ENCODE measurements at regions of chr6 and their contacts with region 1.

Region 1: DNA sequence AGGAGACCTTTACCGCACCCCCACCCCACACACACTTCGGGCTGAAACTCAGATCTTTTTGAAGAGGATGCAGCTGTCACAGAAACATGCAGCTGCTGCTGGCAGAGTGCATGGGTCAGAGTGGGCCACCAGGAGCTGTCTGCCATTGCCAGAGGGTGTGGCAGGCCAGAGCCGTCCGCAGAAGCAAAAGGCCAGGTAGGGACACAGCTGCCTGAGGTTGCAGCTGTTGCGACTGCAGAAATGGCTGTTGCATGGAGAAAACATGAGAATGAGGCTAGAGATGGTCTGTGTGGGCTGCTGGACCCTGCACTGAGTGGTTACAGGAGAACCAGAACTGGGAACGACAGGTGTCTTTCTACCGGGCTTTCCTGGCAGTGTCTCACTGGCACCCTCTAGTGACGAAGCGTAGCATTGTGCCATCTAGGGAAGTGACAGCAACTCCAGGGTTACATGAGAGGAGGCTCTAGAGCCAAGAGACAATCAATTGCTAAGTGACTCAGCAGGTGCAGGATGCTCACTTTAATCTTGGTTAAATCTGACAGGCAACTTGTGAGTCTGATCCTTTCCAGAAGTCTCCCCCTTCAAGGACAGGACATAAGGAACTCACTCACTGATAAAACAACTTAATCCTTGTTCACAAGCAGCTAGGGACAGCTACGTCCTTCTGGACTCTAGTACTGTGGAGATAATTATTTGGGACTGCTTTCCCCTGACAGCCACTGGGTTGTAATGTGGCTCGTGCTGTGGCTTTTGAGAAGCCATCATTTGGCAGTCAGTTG is 29.1 kb upstream of the SERPINB9 start:
- DNase-seq: peak; percentile 78 to 84 (median 81)
- ATAC-seq: peak; percentile 89 to 97 (median 95)
- H3K4me3 ChIP-seq: peak overlapping the region in 5 of 12 donors; percentile 15 to 33 (median 18)
- H3K27ac ChIP-seq: peak overlapping the region in 7 of 12 donors; percentile 4 to 57 (median 40)
- H3K4me1 ChIP-seq: peaks cover 0 to 10% (median 5%) of the 10 kb centered on the region in 12 donors
- H3K27me3 ChIP-seq: no peaks in the 10 kb centered on the region
- CTCF ChIP-seq: peak; percentile 95 to 99 (median 97)
- POLR2A ChIP-seq: no peak

Region 2: DNA sequence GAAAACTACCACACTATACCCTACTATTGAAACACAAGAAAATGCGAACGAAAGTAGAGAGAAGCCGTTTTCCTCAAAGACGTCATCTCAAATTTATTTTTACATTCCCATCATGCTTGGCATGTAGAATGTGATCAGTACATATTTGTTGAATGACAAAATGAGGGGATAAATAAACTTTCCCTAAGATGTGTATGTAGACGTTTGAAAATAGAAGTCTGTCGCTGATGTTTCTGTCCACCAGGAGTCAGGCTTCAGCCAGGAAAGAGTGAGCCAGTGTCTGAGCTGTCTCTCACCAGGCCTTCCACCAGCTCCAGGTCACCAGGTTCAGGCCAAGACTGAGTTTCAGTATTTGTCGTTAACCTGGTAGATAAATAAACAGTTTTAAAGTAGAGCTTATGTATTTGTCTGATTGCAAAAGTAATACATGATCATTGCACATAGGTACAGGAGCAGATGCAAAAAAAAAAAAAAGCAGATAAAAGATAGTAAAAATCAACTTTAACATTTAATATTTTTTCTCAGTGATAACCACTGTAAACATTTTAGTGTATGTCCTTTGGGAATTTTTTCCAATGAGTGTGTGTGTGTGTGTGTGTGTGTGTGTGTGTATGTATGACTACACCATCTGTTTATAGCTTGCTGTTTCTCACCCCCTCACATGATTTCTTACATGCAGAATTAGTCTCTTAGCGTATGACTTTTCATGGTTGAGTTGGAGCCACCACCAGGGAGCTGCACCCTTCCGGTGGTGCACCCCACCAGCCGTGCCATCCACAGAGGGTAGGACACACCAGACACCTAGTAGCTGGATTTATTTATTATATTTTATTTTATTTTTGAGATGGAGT is 140.8 kb before region 1 on chr6:
- intact Hi-C with region 1: loop called in 9 of 10 experiments (anchors 2 to 5 kb)
- DNase-seq: peak in 4 of 5 donors; percentile 68 to 78 (median 72)
- ATAC-seq: peak; percentile 82 to 91 (median 86)
- H3K4me3 ChIP-seq: peak overlapping the region in 2 of 12 donors; percentile 5 to 8
- H3K27ac ChIP-seq: peak overlapping the region; percentile 35 to 88 (median 68)
- H3K4me1 ChIP-seq: peaks cover 0 to 59% (median 25%) of the 10 kb centered on the region in 12 donors
- H3K27me3 ChIP-seq: no peaks in the 10 kb centered on the region
- CTCF ChIP-seq: peak; percentile 62 to 89 (median 72)
- POLR2A ChIP-seq: no peak

Region 3: GRCh38 chr6:2876210-2877056 is 55.7 kb before region 1 on chr6:
- intact Hi-C with region 1: no loop called
- DNase-seq: peak; percentile 76 to 86 (median 82)
- ATAC-seq: peak; percentile 88 to 94 (median 92)
- H3K4me3 ChIP-seq: peak overlapping the region; percentile 49 to 86 (median 68)
- H3K27ac ChIP-seq: peak overlapping the region; percentile 76 to 96 (median 87)
- H3K4me1 ChIP-seq: peaks cover 0 to 57% (median 26%) of the 10 kb centered on the region in 12 donors
- H3K27me3 ChIP-seq: no peaks in the 10 kb centered on the region
- CTCF ChIP-seq: no peak
- POLR2A ChIP-seq: no peak

Measured in heart left ventricle (tissue), 16 donors.